MCF 10A (cell line): ENCODE measurements at regions of chr3 and their contacts with region 1.

Region 1: DNA sequence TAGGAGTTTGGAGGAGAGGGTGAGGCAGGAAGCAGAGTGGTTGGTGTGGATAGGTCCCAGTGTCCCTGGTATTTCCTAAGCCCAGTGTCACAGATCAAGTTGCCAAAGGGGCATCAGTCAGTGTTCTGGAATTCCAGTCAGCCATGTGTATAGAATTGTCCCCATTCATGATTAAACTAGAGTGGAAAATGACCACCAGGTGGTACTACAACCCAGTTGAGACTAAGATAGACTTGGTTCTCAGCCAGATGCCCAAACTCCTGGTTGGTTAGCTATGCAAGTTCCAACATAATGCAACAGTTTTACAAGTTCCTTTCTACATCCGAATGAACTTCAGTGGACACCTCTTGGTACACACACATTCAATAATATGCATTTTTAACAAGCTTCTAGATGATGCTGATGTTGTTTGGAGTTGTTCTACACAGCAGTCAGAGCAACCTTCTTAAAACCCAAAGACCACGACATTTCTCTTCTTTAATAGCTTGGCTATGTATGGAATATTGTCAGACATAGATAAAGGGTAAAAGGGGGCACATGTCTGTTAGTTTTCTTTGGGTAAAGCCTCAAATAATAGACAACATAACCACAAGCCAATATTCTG is 8.4 kb upstream of the ATR start:
- DNase-seq: peak; percentile 89
- H3K4me3 Mint-ChIP-seq: no peak overlapping the region
- H3K27ac Mint-ChIP-seq: no peak overlapping the region
- H3K4me1 Mint-ChIP-seq: peaks cover 6% of the 10 kb centered on the region
- H3K27me3 Mint-ChIP-seq: peaks cover 21% of the 10 kb centered on the region
- CTCF ChIP-seq: peak; percentile 55

Region 2: GRCh38 chr3:142366436-142366835 is 220.5 kb before region 1 on chr3:
- CTCF ChIA-PET with region 1: no interaction called
- POLR2A ChIA-PET with region 1: no interaction called
- intact Hi-C with region 1: no loop called
- DNase-seq: peak; percentile 18
- H3K4me3 Mint-ChIP-seq: no peak overlapping the region
- H3K27ac Mint-ChIP-seq: no peak overlapping the region
- H3K4me1 Mint-ChIP-seq: no peaks in the 10 kb centered on the region
- H3K27me3 Mint-ChIP-seq: no peaks in the 10 kb centered on the region
- CTCF ChIP-seq: peak; percentile 14

Region 3: GRCh38 chr3:142680710-142681109 is 93.8 kb after region 1 on chr3:
- CTCF ChIA-PET with region 1: interaction called, 16 read pairs
- POLR2A ChIA-PET with region 1: no interaction called
- intact Hi-C with region 1: loop called (anchors 1 kb)
- DNase-seq: peak; percentile 24
- H3K4me3 Mint-ChIP-seq: no peak overlapping the region
- H3K27ac Mint-ChIP-seq: no peak overlapping the region
- H3K4me1 Mint-ChIP-seq: no peaks in the 10 kb centered on the region
- H3K27me3 Mint-ChIP-seq: no peaks in the 10 kb centered on the region
- CTCF ChIP-seq: no peak

Region 4: GRCh38 chr3:142904639-142905436 is 317.9 kb after region 1 on chr3:
- CTCF ChIA-PET with region 1: interaction called, 3 read pairs
- POLR2A ChIA-PET with region 1: no interaction called
- intact Hi-C with region 1: loop called (anchors 2 kb)
- DNase-seq: peak; percentile 64
- H3K4me3 Mint-ChIP-seq: no peak overlapping the region
- H3K27ac Mint-ChIP-seq: no peak overlapping the region
- H3K4me1 Mint-ChIP-seq: peaks cover 16% of the 10 kb centered on the region
- H3K27me3 Mint-ChIP-seq: no peaks in the 10 kb centered on the region
- CTCF ChIP-seq: peak; percentile 25

Region 5: DNA sequence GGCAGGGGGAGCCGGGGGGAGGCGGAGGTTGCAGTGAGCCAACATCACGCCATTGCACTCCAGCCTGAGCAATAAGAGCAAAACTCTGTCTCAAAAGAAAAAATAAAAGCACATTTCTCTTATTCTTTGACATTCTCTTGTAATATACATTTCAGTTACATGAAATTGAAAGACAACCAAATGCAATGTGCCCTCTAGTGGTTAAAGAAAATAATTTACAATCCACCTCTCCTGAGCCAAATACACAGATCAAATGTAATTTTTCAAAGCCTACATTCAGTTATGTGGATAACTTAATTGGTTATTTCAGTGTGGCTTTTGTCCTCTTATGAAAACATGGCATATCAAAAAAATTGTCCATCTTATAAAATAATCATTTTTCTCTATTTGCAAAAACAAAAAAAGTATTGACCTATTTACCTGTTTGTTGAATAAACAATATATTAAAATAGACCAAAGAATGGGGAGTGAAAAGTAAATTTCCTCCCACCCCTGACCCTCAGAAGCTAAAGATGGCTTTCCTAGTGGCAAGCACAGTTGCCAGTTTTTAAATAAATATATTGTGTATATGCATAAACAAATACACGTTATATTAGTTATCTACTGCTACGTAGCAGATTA is 400.3 kb after region 1 on chr3:
- CTCF ChIA-PET with region 1: interaction called, 8 read pairs
- POLR2A ChIA-PET with region 1: no interaction called
- intact Hi-C with region 1: loop called (anchors 1 kb)
- DNase-seq: peak; percentile 54
- H3K4me3 Mint-ChIP-seq: no peak overlapping the region
- H3K27ac Mint-ChIP-seq: no peak overlapping the region
- H3K4me1 Mint-ChIP-seq: no peaks in the 10 kb centered on the region
- H3K27me3 Mint-ChIP-seq: peaks cover 11% of the 10 kb centered on the region
- CTCF ChIP-seq: peak; percentile 54

Region 6: GRCh38 chr3:143001369-143002082 is 414.6 kb after region 1 on chr3 and contains the start of gene U2SURP:
- CTCF ChIA-PET with region 1: interaction called, 19 read pairs
- POLR2A ChIA-PET with region 1: interaction called, 11 read pairs
- intact Hi-C with region 1: no loop called
- DNase-seq: peak; percentile 98
- H3K4me3 Mint-ChIP-seq: peak within 1 kb of the TSS; percentile 94
- H3K27ac Mint-ChIP-seq: peak within 1 kb of the TSS; percentile 99
- H3K4me1 Mint-ChIP-seq: peaks cover 25% of the 10 kb centered on the region
- H3K27me3 Mint-ChIP-seq: no peaks in the 10 kb centered on the region
- CTCF ChIP-seq: no peak
- total RNA-seq, gene U2SURP: 131 and 146 TPM in 2 replicates